HepG2 (cell line): ENCODE measurements at regions of chr1 and their contacts with region 1.

Region 1: DNA sequence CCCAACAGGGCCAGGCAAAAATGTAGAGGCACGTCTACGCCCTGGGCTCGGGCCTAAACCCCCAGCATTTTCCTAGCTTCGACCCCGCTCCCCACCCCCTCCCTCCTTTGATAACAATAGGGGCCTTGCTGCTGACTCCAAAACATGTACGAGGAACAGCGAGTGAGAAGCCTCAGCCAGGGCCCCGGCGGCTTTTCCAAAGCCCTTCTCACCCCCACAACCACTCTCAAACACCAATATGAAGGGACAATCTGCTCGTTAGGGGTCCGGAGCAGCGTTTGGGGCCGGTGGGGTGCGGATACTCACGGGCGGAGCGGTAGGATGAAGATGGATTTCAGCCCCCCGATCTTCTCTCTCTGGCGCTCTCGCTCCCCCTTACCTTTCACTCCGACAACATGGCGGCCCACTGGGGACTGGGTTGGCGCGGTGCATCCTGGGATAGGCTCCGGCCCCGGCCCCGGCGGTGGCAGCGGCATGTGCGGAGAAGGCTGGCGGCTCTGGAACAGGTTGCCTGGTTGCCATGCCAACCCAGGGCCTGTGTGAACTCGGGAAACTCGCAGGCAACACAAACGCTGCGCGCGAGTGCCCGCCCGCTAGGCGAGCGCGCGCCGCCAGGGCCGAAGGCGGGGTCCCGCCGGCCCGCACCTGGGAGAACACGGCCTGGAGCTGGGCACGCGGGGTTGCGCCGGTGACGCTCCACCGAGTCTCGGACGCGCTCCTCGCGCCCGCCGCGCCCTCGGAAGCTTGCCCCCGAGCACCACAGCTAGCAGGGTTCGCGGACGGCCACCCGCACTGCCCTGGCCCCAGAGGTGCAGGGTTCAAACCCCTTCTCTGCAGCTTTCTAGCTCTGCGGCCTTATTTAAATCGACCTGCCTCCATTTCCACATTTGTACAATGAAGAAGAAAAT is at the start of gene PUM1:
- DNase-seq: peak; percentile 97
- ATAC-seq: peak; percentile 96
- H3K4me3 ChIP-seq: peak within 1 kb of the TSS; percentile 86 to 95 (median 88)
- H3K27ac ChIP-seq: peak within 1 kb of the TSS; percentile 100
- H3K4me1 ChIP-seq: peaks cover 48% of the 10 kb centered on the region
- H3K27me3 ChIP-seq: no peaks in the 10 kb centered on the region; a peak in 1 of 5 replicates
- CTCF ChIP-seq: peak; percentile 9; the same call in 1 of the 2 replicates
- EP300 ChIP-seq: no peak
- POLR2A ChIP-seq: peak; percentile 76 to 93
- RAD21 ChIP-seq: peak; percentile 47; the same call in 1 of the 2 replicates
- total RNA-seq, gene PUM1: 64.7 and 84.6 TPM in 2 replicates

Region 2: GRCh38 chr1:31041529-31041928 is 24.0 kb before region 1 on chr1:
- CTCF ChIA-PET with region 1: no interaction called
- POLR2A ChIA-PET with region 1: interaction called, 10 read pairs
- in situ Hi-C with region 1: no loop called
- intact Hi-C with region 1: no loop called
- DNase-seq: peak; percentile 13
- ATAC-seq: peak; percentile 37
- H3K4me3 ChIP-seq: no peak overlapping the region
- H3K27ac ChIP-seq: no peak overlapping the region
- H3K4me1 ChIP-seq: peaks cover 42% of the 10 kb centered on the region
- H3K27me3 ChIP-seq: no peaks in the 10 kb centered on the region
- CTCF ChIP-seq: no peak
- EP300 ChIP-seq: no peak
- POLR2A ChIP-seq: no peak
- RAD21 ChIP-seq: no peak

Region 3: GRCh38 chr1:31155216-31155841 is 89.8 kb after region 1 on chr1:
- CTCF ChIA-PET with region 1: no interaction called
- POLR2A ChIA-PET with region 1: interaction called, 15 read pairs
- in situ Hi-C with region 1: no loop called
- intact Hi-C with region 1: loop called (anchors 10 kb)
- DNase-seq: peak; percentile 65
- ATAC-seq: peak; percentile 87
- H3K4me3 ChIP-seq: peak overlapping the region; percentile 67 to 76 (median 75)
- H3K27ac ChIP-seq: peak overlapping the region; percentile 73
- H3K4me1 ChIP-seq: peaks cover 24% of the 10 kb centered on the region
- H3K27me3 ChIP-seq: no peaks in the 10 kb centered on the region
- CTCF ChIP-seq: peak; percentile 54
- EP300 ChIP-seq: no peak
- POLR2A ChIP-seq: peak; percentile 34 to 40; a peak in 2 of 4 replicates
- RAD21 ChIP-seq: peak; percentile 27; the same call in 1 of the 2 replicates

Region 4: GRCh38 chr1:31170486-31170735 is 104.8 kb after region 1 on chr1:
- CTCF ChIA-PET with region 1: no interaction called
- POLR2A ChIA-PET with region 1: interaction called, 11 read pairs
- in situ Hi-C with region 1: no loop called
- intact Hi-C with region 1: no loop called
- DNase-seq: no peak
- ATAC-seq: no peak
- H3K4me3 ChIP-seq: no peak overlapping the region
- H3K27ac ChIP-seq: peak overlapping the region; percentile 15
- H3K4me1 ChIP-seq: peaks cover 53% of the 10 kb centered on the region
- H3K27me3 ChIP-seq: no peaks in the 10 kb centered on the region
- CTCF ChIP-seq: no peak
- EP300 ChIP-seq: no peak
- POLR2A ChIP-seq: no peak
- RAD21 ChIP-seq: no peak